Caco-2 (cell line): ENCODE measurements at regions of chr10 and their contacts with region 1.

Region 1: DNA sequence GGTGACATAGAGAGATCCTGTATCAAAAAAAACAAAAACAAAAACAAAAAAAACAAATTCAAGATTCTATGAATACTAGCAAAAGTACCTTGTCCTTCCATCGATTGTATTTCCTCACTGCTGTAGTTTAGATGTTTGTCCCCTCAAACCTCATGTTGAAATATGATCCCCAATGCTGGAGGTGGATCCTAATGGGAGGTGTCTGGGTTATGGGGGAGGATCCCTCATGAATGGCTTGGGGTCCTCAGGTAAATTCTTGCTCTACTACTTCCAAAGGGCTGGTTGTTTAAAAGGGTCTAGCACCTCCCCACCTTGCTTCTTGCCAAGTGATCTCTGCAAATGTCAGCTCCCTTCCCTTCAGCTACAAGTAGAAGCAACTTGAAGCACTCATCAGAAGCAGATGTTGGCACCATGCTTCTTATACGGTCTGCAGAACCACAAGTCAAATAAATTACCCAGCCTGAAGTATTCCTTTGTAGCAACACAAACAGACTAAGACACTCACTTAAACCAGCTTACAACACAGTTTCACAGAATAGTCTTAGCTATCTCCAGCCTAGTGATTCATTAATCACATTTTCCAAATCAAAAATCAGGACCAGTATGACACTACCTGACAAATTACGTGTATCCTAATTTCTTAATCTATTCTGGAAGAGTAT is 20.7 kb downstream of the ABI1 start:
- DNase-seq: no peak
- H3K4me3 ChIP-seq: no peak overlapping the region
- H3K4me3 Mint-ChIP-seq: no peak overlapping the region
- H3K27ac Mint-ChIP-seq: no peak overlapping the region
- H3K4me1 ChIP-seq: no peaks in the 10 kb centered on the region
- H3K4me1 Mint-ChIP-seq: peaks cover 20% of the 10 kb centered on the region
- H3K27me3 ChIP-seq: no peaks in the 10 kb centered on the region
- H3K27me3 Mint-ChIP-seq: no peaks in the 10 kb centered on the region
- CTCF ChIP-seq: no peak

Region 2: DNA sequence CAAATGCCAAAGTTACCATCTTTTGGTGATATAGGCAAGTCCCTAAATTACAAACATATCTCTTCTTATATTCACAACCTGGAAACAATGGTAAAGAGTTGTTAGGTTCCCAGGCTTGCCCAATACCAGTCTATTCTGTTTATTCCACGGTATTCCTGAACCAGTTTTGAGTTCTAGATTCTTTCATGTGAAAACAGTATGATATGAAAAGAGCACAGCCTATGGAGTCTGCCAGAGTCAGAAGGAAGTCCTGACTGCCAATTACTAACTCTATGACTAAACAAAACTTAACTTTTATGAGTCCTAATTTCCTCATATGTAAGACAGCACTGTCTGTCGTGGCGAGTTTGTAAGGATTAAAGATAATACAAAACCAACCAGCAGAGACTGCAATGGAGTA is 15.1 kb after region 1 on chr10:
- CTCF ChIA-PET with region 1: no interaction called
- POLR2A ChIA-PET with region 1: interaction called, 12 read pairs
- intact Hi-C with region 1: no loop called
- DNase-seq: no peak
- H3K4me3 ChIP-seq: no peak overlapping the region
- H3K4me3 Mint-ChIP-seq: no peak overlapping the region
- H3K27ac Mint-ChIP-seq: no peak overlapping the region
- H3K4me1 ChIP-seq: peaks cover 38% of the 10 kb centered on the region
- H3K4me1 Mint-ChIP-seq: peaks cover 49% of the 10 kb centered on the region
- H3K27me3 ChIP-seq: no peaks in the 10 kb centered on the region
- H3K27me3 Mint-ChIP-seq: no peaks in the 10 kb centered on the region
- CTCF ChIP-seq: no peak